Activated CD4-positive, alpha-beta memory T cell treated with anti-CD3 and anti-CD28 coated beads for 36 hours (primary cell): ENCODE measurements at regions of chr3 and their contacts with region 1.

Region 1: DNA sequence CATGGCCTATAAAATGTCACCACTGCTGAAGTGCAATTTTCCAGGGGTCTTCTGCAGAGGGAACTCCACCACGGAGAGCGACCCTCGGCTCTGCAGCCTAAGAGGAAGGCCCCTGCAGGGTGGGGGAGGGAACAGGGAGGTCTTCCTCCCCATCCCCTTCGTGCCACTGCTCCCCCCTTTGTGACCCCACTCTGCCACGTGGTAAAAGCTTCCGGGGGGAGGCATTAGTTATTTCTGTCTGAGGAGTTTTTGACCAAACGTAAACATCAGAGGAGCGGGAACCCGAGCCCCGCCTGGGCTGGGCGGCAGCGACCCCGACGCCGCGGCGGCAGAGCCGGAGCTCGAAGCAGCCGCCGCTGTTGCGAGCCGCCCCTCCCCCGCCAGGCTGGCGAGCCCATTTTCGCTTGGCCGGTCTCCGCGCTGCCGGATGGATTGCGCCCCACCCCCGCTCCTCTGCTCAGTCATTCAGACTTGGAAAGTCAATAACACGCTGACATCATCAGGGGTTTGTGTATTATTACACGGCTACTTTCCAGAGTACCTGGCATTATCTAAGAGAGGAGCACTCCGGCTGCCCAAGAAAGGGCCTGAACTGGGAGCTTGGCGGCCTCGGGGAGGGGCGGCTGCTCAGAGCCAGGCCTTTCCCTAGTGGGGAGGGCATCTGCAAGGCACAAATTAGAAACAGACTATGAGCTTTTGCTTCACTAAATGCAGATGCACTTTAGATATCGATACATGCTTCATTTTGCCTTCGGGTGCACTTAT is 162.5 kb upstream of the TBL1XR1 start:
- DNase-seq: peak; percentile 97
- H3K4me3 Mint-ChIP-seq: peak overlapping the region; percentile 70
- H3K27ac Mint-ChIP-seq: peak overlapping the region; percentile 94
- H3K4me1 Mint-ChIP-seq: peaks cover 55% of the 10 kb centered on the region
- H3K27me3 Mint-ChIP-seq: no peaks in the 10 kb centered on the region

Region 2: DNA sequence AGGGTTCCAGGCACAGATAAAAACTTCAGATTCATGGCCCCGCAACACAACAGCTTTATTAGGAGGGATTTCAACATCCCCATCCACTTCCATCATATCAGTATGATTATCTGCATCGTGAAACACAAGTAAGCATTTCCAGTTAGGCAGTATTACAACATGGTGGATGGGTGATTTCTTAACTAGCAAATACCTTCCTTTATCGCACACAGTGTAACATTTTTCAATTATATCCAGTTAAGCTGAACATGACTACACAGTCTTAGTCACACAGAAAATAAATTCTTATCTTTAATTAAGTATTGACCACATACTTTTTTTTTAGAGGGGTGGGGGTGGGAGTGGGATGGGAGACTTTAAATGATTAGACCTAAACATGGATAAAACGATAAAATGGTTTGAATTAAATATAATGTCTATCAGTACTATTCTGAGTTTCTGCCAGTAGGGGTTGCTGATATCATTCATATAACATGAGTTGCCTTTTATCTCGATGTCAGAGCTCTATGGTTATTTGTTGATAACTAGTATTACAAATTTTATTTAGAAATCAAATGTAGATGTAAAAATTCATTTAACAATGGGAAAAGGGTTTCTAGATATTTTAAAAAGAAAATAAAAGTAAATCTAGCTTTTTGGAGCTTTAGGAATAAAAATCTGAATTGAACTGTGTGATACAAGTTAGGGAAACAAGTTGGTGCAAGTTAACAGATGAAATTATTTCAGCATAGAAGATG is 309.1 kb before region 1 on chr3:
- CTCF ChIA-PET with region 1: interaction called, 20 read pairs
- POLR2A ChIA-PET with region 1: no interaction called
- intact Hi-C with region 1: no loop called
- DNase-seq: no peak
- H3K4me3 Mint-ChIP-seq: no peak overlapping the region
- H3K27ac Mint-ChIP-seq: no peak overlapping the region
- H3K4me1 Mint-ChIP-seq: peaks cover 12% of the 10 kb centered on the region
- H3K27me3 Mint-ChIP-seq: no peaks in the 10 kb centered on the region

Region 3: GRCh38 chr3:177144923-177145780 is 214.6 kb before region 1 on chr3:
- CTCF ChIA-PET with region 1: interaction called, 3 read pairs
- POLR2A ChIA-PET with region 1: interaction called, 5 read pairs
- intact Hi-C with region 1: loop called (anchors 2 kb)
- DNase-seq: no peak
- H3K4me3 Mint-ChIP-seq: peak overlapping the region; percentile 34
- H3K27ac Mint-ChIP-seq: peak overlapping the region; percentile 66
- H3K4me1 Mint-ChIP-seq: peaks cover 67% of the 10 kb centered on the region
- H3K27me3 Mint-ChIP-seq: no peaks in the 10 kb centered on the region

Region 4: GRCh38 chr3:177337541-177338331 is 22.0 kb before region 1 on chr3:
- CTCF ChIA-PET with region 1: interaction called, 8 read pairs
- POLR2A ChIA-PET with region 1: interaction called, 11 read pairs
- intact Hi-C with region 1: loop called (anchors 1 kb)
- DNase-seq: peak; percentile 91
- H3K4me3 Mint-ChIP-seq: no peak overlapping the region
- H3K27ac Mint-ChIP-seq: peak overlapping the region; percentile 77
- H3K4me1 Mint-ChIP-seq: peaks cover 29% of the 10 kb centered on the region
- H3K27me3 Mint-ChIP-seq: peaks cover 4% of the 10 kb centered on the region

Region 5: GRCh38 chr3:177385831-177386301 is 26.1 kb after region 1 on chr3:
- CTCF ChIA-PET with region 1: no interaction called
- POLR2A ChIA-PET with region 1: no interaction called
- intact Hi-C with region 1: no loop called
- DNase-seq: no peak
- H3K4me3 Mint-ChIP-seq: no peak overlapping the region
- H3K27ac Mint-ChIP-seq: no peak overlapping the region
- H3K4me1 Mint-ChIP-seq: peaks cover 6% of the 10 kb centered on the region
- H3K27me3 Mint-ChIP-seq: no peaks in the 10 kb centered on the region

Region 6: GRCh38 chr3:177419904-177420601 is 60.3 kb after region 1 on chr3:
- CTCF ChIA-PET with region 1: no interaction called
- POLR2A ChIA-PET with region 1: interaction called, 3 read pairs
- intact Hi-C with region 1: loop called (anchors 1 kb)
- DNase-seq: peak; percentile 36
- H3K4me3 Mint-ChIP-seq: no peak overlapping the region
- H3K27ac Mint-ChIP-seq: peak overlapping the region; percentile 76
- H3K4me1 Mint-ChIP-seq: peaks cover 37% of the 10 kb centered on the region
- H3K27me3 Mint-ChIP-seq: no peaks in the 10 kb centered on the region

Region 7: DNA sequence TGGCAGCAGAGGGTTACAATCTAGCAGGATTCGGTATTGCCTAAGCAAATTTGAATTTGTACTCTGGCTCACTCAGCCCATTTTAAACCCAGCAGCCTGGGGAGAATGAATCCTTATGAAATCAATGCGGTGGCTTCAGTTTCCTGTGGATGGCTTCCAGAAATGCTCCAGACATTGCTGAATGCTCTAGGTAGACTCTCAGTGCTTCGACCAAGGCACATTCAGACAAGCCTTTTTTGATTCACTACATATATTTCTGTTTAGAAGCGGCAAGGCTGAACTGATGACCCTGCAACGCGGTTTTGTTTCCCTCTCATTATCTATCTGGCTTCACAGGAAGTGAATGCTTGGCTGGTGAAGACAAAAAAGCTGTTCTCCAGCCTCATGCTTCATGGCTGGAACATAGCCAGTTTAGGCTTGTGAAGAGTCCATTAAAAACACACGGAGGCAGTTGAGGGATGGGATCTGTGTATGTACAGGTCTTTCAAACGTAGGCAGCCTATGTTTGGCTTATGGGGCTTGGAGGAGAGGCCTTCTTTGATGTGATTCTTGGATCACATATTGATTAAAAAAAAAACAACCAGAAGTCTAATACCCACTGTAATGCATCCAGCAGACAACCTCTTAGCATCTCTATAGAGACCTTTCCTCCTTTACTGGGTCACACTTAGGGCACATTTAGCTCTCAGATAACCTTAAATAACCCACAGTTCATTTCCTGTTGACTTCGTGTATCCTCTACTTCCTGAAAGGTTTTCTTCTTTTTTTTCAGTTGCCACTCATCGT is 237.7 kb after region 1 on chr3:
- CTCF ChIA-PET with region 1: interaction called, 5 read pairs
- POLR2A ChIA-PET with region 1: no interaction called
- intact Hi-C with region 1: loop called (anchors 5 kb)
- DNase-seq: peak; percentile 56
- H3K4me3 Mint-ChIP-seq: peak overlapping the region; percentile 47
- H3K27ac Mint-ChIP-seq: peak overlapping the region; percentile 88
- H3K4me1 Mint-ChIP-seq: peaks cover 75% of the 10 kb centered on the region
- H3K27me3 Mint-ChIP-seq: no peaks in the 10 kb centered on the region